CD8-positive, alpha-beta T cell (primary cell): ENCODE measurements at regions of chr4 and their contacts with region 1.

Region 1: DNA sequence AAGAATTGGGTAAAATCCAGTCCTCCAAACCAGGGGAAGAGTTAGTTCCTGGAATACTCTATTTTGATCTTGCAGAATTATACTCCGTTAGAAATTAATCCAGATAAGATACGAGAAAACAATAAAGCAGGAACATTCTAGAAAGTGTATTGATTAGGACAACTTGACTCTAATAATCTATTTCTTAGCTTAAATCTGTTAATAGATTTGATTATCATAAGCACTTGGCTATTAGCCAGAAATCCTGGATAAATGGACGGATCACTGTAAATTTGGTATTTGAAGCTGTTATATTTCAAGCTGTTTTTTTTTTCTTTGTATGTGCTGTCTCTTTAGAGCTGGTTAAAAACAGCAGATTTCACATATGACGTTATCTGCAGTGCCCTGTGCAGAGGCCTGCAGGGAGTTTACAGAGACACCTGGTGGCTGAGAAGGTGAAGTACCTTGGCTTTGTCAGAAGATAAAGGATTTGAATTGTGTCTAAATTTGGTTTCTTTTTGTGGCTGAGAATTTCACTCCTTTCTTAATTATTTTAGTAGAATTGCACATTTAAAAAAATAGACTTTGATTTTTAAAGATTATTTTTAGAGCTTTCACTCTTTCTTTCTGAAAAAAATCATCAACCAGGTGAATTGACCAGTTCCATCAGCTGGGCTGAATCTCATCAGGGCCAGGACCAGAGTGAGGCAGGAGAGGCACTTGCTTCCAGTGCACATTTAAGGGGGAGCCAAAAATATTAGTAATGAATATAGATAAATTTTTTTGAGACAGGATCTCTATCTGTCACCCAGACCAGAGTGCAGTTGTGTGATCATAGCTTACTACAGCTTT is 9.7 kb upstream of the CHRNA9 start:
- DNase-seq: peak in 8 of 9 experiments; percentile 47 to 89 (median 69)
- ATAC-seq: peak; percentile 100
- H3K4me3 ChIP-seq: no peak overlapping the region
- H3K4me3 Mint-ChIP-seq: no peak overlapping the region
- H3K27ac ChIP-seq: no peak overlapping the region
- H3K27ac Mint-ChIP-seq: peak overlapping the region; percentile 3
- H3K4me1 ChIP-seq: peaks cover 11% of the 10 kb centered on the region
- H3K4me1 Mint-ChIP-seq: peaks cover 30% of the 10 kb centered on the region
- H3K27me3 ChIP-seq: no peaks in the 10 kb centered on the region
- H3K27me3 Mint-ChIP-seq: no peaks in the 10 kb centered on the region
- CTCF ChIP-seq: peak; percentile 99

Region 2: DNA sequence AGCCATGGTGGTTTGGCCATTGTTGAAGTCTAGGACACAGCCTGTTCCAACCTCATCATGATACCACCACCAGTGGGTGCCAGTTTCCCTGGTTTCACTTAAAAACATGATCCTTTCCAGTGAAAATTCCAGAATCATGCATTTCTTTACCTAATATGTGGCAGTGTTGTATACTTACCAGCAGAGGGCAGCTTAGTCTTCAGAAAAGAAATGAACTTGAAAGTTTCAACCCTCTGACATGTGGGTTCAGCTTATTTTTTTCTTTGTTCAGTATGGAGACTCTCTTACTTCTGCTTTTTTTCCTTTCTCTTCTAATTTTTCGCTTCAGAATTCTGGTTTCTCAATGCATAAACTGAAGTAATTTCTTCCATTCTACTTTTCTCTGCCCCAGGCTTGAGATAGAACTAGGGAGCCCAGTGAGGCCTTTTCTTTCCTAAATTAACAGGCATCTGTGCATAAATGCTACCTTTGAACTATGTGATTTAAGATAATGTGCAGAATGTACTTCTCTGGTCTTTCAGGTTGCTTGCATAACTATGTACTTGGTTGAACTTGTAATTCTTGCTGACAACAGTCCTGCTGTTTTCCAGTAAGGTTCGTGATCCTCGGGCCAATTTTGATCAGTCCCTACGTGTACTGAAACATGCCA is 855.9 kb before region 1 on chr4:
- CTCF ChIA-PET with region 1: no interaction called
- POLR2A ChIA-PET with region 1: no interaction called
- intact Hi-C with region 1: loop called in 1 of 2 experiments (anchors 5 kb)
- DNase-seq: peak in 2 of 9 experiments; percentile 55 to 72
- ATAC-seq: peak; percentile 93
- H3K4me3 ChIP-seq: no peak overlapping the region
- H3K4me3 Mint-ChIP-seq: no peak overlapping the region
- H3K27ac ChIP-seq: no peak overlapping the region
- H3K27ac Mint-ChIP-seq: no peak overlapping the region
- H3K4me1 ChIP-seq: no peaks in the 10 kb centered on the region
- H3K4me1 Mint-ChIP-seq: peaks cover 4% of the 10 kb centered on the region
- H3K27me3 ChIP-seq: no peaks in the 10 kb centered on the region
- H3K27me3 Mint-ChIP-seq: no peaks in the 10 kb centered on the region
- CTCF ChIP-seq: peak; percentile 82

Region 3: DNA sequence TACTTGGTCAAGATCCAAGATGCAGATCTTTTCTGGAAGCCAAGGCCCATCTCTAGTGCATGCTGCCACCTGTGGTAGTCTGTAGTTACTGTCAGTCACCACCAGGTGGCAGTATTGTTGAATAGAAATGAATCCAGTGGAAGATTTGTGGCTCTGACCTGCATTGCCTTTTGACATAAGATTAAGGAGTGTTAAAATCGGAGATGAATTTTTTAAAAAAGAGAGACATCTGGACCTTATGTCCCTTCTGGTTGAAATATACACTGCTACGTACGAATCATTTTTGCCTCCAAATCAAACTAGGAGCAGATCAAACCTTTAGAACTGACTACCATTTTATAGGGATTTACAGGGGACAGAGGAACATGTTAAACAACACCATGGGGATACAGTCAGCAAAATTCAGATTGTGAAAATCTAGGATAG is 175.4 kb before region 1 on chr4:
- CTCF ChIA-PET with region 1: interaction called, 72 read pairs
- POLR2A ChIA-PET with region 1: no interaction called
- intact Hi-C with region 1: loop called (anchors 1 kb)
- DNase-seq: peak; percentile 46 to 88 (median 75)
- ATAC-seq: peak; percentile 94
- H3K4me3 ChIP-seq: no peak overlapping the region
- H3K4me3 Mint-ChIP-seq: no peak overlapping the region
- H3K27ac ChIP-seq: no peak overlapping the region
- H3K27ac Mint-ChIP-seq: peak overlapping the region; percentile 81
- H3K4me1 ChIP-seq: peaks cover 36% of the 10 kb centered on the region
- H3K4me1 Mint-ChIP-seq: peaks cover 35% of the 10 kb centered on the region
- H3K27me3 ChIP-seq: no peaks in the 10 kb centered on the region
- H3K27me3 Mint-ChIP-seq: no peaks in the 10 kb centered on the region
- CTCF ChIP-seq: peak; percentile 88

Region 4: GRCh38 chr4:40199999-40200874 is 125.2 kb before region 1 on chr4:
- CTCF ChIA-PET with region 1: interaction called, 19 read pairs
- POLR2A ChIA-PET with region 1: interaction called, 8 read pairs
- intact Hi-C with region 1: no loop called
- DNase-seq: peak in 7 of 9 experiments; percentile 41 to 88 (median 67)
- ATAC-seq: peak; percentile 24
- H3K4me3 ChIP-seq: peak overlapping the region; percentile 83 to 87
- H3K4me3 Mint-ChIP-seq: peak overlapping the region; percentile 100
- H3K27ac ChIP-seq: peak overlapping the region; percentile 89 to 96
- H3K27ac Mint-ChIP-seq: peak overlapping the region; percentile 100
- H3K4me1 ChIP-seq: peaks cover 25% of the 10 kb centered on the region
- H3K4me1 Mint-ChIP-seq: peaks cover 41% of the 10 kb centered on the region
- H3K27me3 ChIP-seq: no peaks in the 10 kb centered on the region
- H3K27me3 Mint-ChIP-seq: no peaks in the 10 kb centered on the region
- CTCF ChIP-seq: no peak

Region 5: DNA sequence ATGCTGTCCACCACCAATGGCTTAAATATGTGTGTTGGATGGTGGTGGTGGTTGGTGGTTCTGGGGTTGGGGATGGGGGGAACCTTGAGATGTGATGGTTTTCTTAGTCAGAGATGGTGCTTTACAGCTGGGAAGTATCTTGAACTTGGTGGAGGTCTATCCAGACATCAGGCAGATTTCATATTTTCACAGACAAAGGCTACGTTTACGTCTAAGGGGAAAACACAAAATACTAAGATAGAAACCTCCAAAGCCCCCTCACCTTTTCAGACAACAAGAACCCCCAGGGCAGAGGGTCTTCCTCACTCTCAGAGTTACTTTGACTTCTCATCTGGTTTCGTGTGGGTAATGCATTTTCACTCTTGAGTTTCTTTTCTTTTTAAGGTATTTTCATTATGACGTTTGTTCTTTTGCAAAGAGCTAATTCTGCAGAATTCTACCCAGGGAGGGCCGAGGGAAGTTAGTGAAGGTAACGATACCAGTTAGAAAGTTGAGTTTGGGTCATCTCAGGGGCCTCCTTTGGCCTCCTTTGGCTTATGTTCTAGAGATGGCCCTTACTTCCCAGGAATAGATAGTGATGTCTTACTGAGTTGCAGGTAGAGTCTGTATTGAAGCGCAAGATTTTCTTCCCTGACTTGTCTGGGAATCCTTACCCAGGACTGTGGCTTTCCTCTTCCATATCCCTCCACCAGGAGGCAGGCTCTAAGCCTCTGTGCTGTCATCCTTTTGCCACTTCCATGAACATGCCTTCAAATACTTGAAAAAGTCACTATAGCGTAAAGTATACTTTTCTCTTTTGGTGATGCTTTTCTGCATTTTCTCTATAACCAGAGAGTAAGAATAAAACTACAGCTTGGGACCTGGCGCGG is 96.7 kb before region 1 on chr4:
- CTCF ChIA-PET with region 1: interaction called, 19 read pairs
- POLR2A ChIA-PET with region 1: interaction called, 3 read pairs
- intact Hi-C with region 1: no loop called
- DNase-seq: peak in 3 of 9 experiments; percentile 35 to 65 (median 43)
- ATAC-seq: no peak
- H3K4me3 ChIP-seq: peak overlapping the region; percentile 3 to 25
- H3K4me3 Mint-ChIP-seq: peak overlapping the region; percentile 82
- H3K27ac ChIP-seq: peak overlapping the region; percentile 29 to 96
- H3K27ac Mint-ChIP-seq: peak overlapping the region; percentile 95
- H3K4me1 ChIP-seq: peaks cover 95% of the 10 kb centered on the region
- H3K4me1 Mint-ChIP-seq: peaks cover 94% of the 10 kb centered on the region
- H3K27me3 ChIP-seq: no peaks in the 10 kb centered on the region
- H3K27me3 Mint-ChIP-seq: no peaks in the 10 kb centered on the region
- CTCF ChIP-seq: peak; percentile 42

Region 6: GRCh38 chr4:40337051-40337450 is 11.6 kb after region 1 on chr4:
- CTCF ChIA-PET with region 1: interaction called, 10 read pairs
- POLR2A ChIA-PET with region 1: no interaction called
- intact Hi-C with region 1: no loop called
- DNase-seq: no peak
- ATAC-seq: no peak
- H3K4me3 ChIP-seq: no peak overlapping the region
- H3K4me3 Mint-ChIP-seq: no peak overlapping the region
- H3K27ac ChIP-seq: no peak overlapping the region
- H3K27ac Mint-ChIP-seq: no peak overlapping the region
- H3K4me1 ChIP-seq: no peaks in the 10 kb centered on the region
- H3K4me1 Mint-ChIP-seq: peaks cover 4% of the 10 kb centered on the region
- H3K27me3 ChIP-seq: no peaks in the 10 kb centered on the region
- H3K27me3 Mint-ChIP-seq: no peaks in the 10 kb centered on the region
- CTCF ChIP-seq: no peak

Region 7: GRCh38 chr4:40369437-40370274 is 44.3 kb after region 1 on chr4:
- CTCF ChIA-PET with region 1: no interaction called
- POLR2A ChIA-PET with region 1: no interaction called
- intact Hi-C with region 1: no loop called
- DNase-seq: no peak
- ATAC-seq: no peak
- H3K4me3 ChIP-seq: no peak overlapping the region
- H3K4me3 Mint-ChIP-seq: no peak overlapping the region
- H3K27ac ChIP-seq: no peak overlapping the region
- H3K27ac Mint-ChIP-seq: no peak overlapping the region
- H3K4me1 ChIP-seq: no peaks in the 10 kb centered on the region
- H3K4me1 Mint-ChIP-seq: no peaks in the 10 kb centered on the region
- H3K27me3 ChIP-seq: no peaks in the 10 kb centered on the region
- H3K27me3 Mint-ChIP-seq: no peaks in the 10 kb centered on the region
- CTCF ChIP-seq: no peak